Dorsolateral prefrontal cortex (tissue), 120 donors: ENCODE measurements at regions of chr12 and their contacts with region 1.

Region 1: GRCh38 chr12:124399622-124400021 is 104.7 kb downstream of the RFLNA start:
- DNase-seq: peak in 1 of 10 donors; percentile 39
- H3K4me3 ChIP-seq: no peak overlapping the region
- H3K27ac ChIP-seq: peak overlapping the region in 39 of 59 donors; percentile 4 to 98 (median 44)
- H3K27me3 ChIP-seq: no peaks in the 10 kb centered on the region
- CTCF ChIP-seq: peak; percentile 42 to 80 (median 65)

Region 2: GRCh38 chr12:124273630-124274029 is 126.0 kb before region 1 on chr12:
- intact Hi-C with region 1: no loop called
- DNase-seq: no peak
- H3K4me3 ChIP-seq: no peak overlapping the region
- H3K27ac ChIP-seq: no peak overlapping the region
- H3K27me3 ChIP-seq: no peaks in the 10 kb centered on the region
- CTCF ChIP-seq: peak in 6 of 56 donors; percentile 9 to 32 (median 22)

Region 3: GRCh38 chr12:124457287-124458219 is 57.9 kb after region 1 on chr12:
- intact Hi-C with region 1: loop called in 1 of 2 experiments (anchors 5 kb)
- DNase-seq: peak; percentile 51 to 88 (median 81)
- H3K4me3 ChIP-seq: peak overlapping the region; percentile 28 to 67 (median 52)
- H3K27ac ChIP-seq: peak overlapping the region; percentile 74 to 96 (median 91)
- H3K27me3 ChIP-seq: no peaks in the 10 kb centered on the region
- CTCF ChIP-seq: peak in 4 of 56 donors; percentile 11 to 25 (median 12)

Region 4: DNA sequence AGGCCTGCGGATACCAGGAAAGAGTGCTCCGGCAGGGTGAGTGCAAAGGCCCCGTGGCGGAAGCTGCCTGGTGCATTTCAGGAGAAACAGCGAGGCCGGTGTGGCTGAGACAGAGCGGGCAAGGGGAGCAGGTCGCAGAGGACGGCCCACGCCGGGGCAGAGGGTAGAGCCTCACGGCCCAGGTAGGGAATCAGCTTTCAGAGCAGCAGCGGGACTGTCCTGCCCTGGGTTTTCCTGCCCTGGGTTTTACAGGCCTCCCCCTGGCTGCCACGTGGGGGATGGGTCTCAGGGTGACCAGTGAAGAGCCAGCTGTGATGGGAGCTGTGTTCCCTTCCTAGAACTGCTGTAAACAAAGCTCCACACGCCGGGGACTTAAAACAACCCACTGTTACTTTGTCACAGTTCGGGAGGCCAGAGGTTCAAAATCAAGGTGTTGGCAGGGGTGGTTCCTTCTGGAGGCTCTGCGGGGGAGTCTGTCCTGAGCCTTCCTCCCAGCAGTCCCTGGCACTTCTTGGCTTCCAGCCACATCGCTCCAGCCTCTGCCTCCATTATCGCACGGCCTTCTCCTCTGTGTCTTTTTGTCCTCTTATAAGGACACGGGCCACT is 157.4 kb after region 1 on chr12:
- intact Hi-C with region 1: no loop called
- DNase-seq: peak in 4 of 10 donors; percentile 48 to 68 (median 62)
- H3K4me3 ChIP-seq: peak overlapping the region in 4 of 59 donors; percentile 13 to 40 (median 23)
- H3K27ac ChIP-seq: peak overlapping the region in 56 of 59 donors; percentile 26 to 87 (median 74)
- H3K27me3 ChIP-seq: no peaks in the 10 kb centered on the region
- CTCF ChIP-seq: peak in 37 of 56 donors; percentile 10 to 53 (median 34)